CD4-positive, alpha-beta memory T cell (primary cell): ENCODE measurements at regions of chr11 and their contacts with region 1.

Region 1: GRCh38 chr11:67507864-67508485 is at the start of gene CDK2AP2:
- DNase-seq: peak; percentile 96 to 98 (median 97)
- H3K4me3 ChIP-seq: peak within 1 kb of the TSS; percentile 77 to 79
- H3K4me3 Mint-ChIP-seq: peak within 1 kb of the TSS; percentile 88 to 98 (median 90)
- H3K27ac ChIP-seq: peak within 1 kb of the TSS; percentile 93
- H3K27ac Mint-ChIP-seq: peak within 1 kb of the TSS; percentile 97 to 99 (median 99)
- H3K4me1 ChIP-seq: peaks cover 44% of the 10 kb centered on the region
- H3K4me1 Mint-ChIP-seq: peaks cover 20 to 55% (median 33%) of the 10 kb centered on the region in 4 donors
- H3K27me3 ChIP-seq: no peaks in the 10 kb centered on the region
- H3K27me3 Mint-ChIP-seq: peaks cover 3% of the 10 kb centered on the region in 2 donors
- total RNA-seq, gene CDK2AP2: 85.8 to 86.0 TPM

Region 2: DNA sequence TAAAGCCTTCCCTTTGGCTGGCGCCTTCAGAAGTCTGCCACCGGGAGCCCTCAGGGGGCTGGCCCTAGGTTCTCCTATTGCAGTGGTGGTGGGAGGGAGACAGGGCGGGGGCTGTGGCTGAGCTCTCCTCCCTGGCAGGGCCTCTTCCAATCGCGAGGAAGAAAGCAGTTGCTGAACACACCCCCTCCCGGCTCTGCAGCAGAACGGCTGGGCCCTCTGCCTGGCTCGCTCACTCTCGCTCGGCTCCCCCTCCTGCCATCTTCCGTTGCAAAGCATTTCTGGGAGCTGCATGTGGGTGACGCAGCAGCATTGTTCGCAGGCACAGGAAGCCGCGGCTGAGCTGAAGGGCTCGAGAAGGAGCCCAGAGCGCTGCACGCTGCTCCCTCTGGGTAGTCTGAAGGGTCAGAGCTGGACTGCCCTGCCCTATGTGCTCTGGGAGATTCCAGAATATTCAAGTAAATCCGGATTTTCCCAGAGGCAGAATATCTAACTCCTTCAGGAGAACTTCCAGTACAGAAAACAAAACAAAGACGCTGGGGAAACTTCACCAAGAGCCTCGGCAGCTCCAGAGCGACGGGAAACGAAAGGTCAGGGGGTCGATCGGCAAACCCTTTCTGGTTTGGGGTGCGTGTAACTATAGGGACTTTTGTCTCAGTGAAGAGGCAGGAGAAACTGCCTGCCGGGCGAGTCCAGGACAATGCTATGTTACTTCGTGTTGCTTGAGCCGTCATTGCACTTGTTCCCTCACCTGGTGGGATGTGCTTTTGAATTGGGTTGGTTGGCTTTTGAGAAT is 268.0 kb before region 1 on chr11:
- CTCF ChIA-PET with region 1: no interaction called
- POLR2A ChIA-PET with region 1: no interaction called
- intact Hi-C with region 1: loop called (anchors 2 kb)
- DNase-seq: peak; percentile 95 to 100 (median 98)
- H3K4me3 ChIP-seq: peak overlapping the region; percentile 52 to 87
- H3K4me3 Mint-ChIP-seq: peak overlapping the region; percentile 96 to 100 (median 99)
- H3K27ac ChIP-seq: peak overlapping the region; percentile 97
- H3K27ac Mint-ChIP-seq: peak overlapping the region; percentile 96 to 100 (median 100)
- H3K4me1 ChIP-seq: peaks cover 39% of the 10 kb centered on the region
- H3K4me1 Mint-ChIP-seq: peaks cover 39 to 62% (median 48%) of the 10 kb centered on the region in 4 donors
- H3K27me3 ChIP-seq: no peaks in the 10 kb centered on the region
- H3K27me3 Mint-ChIP-seq: no peaks in the 10 kb centered on the region

Region 3: DNA sequence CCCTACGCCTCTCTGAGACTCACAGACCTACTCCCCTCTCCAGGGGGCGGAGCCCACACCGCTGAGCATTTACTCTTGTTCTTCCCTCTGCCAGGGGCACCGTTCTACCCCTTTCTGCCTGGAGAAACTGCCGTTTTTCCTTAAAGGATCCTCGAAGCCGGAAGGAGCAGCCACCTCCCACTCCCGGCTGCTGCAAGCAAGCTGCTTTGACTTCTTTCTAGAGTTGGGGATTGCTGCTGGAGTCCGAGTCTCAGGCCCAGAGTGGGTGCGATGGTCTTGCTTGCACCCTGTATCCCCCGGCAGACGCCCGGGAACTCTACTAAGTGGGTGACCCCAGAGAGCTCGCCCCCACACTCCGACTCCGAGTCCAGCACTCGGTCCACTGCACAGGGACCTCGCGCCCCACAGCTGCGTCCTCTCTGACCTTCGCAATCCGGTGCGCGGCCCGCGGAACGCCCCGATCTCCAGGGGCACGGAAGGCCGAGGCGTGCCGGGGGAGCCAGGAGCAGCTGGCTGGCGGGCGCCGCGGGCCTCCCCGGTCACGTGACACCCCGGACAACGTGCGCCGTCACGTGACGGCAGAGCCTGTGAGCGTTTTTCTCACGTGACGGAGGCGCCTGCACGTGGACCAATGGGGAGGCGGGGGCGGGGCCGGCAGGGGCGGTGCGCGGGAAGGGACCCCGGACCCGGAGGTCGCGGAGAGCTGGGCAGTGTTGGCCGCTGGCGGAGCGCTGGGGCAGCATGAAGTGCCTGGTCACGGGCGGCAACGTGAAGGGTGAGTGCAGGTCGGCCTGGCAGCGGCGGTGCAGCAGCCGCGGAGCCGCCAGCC is 116.5 kb before region 1 on chr11 and contains the start of gene RAD9A:
- CTCF ChIA-PET with region 1: no interaction called
- POLR2A ChIA-PET with region 1: interaction called, 8 read pairs
- intact Hi-C with region 1: loop called (anchors 1 kb)
- DNase-seq: peak; percentile 86 to 93 (median 89)
- H3K4me3 ChIP-seq: peak within 1 kb of the TSS; percentile 63 to 75
- H3K4me3 Mint-ChIP-seq: peak within 1 kb of the TSS; percentile 87 to 93 (median 91)
- H3K27ac ChIP-seq: peak within 1 kb of the TSS; percentile 79
- H3K27ac Mint-ChIP-seq: peak within 1 kb of the TSS; percentile 82 to 94 (median 87)
- H3K4me1 ChIP-seq: peaks cover 17% of the 10 kb centered on the region
- H3K4me1 Mint-ChIP-seq: peaks cover 23 to 46% (median 36%) of the 10 kb centered on the region in 4 donors
- H3K27me3 ChIP-seq: no peaks in the 10 kb centered on the region
- H3K27me3 Mint-ChIP-seq: no peaks in the 10 kb centered on the region
- total RNA-seq, gene RAD9A: 51.8 to 55.9 TPM

Region 4: GRCh38 chr11:67428052-67428914 is 79.7 kb before region 1 on chr11 and contains the start of gene RPS6KB2:
- CTCF ChIA-PET with region 1: no interaction called
- POLR2A ChIA-PET with region 1: interaction called, 14 read pairs
- intact Hi-C with region 1: loop called (anchors 1 kb)
- DNase-seq: peak; percentile 97 to 99 (median 98)
- H3K4me3 ChIP-seq: peak within 1 kb of the TSS; percentile 94 to 95
- H3K4me3 Mint-ChIP-seq: peak within 1 kb of the TSS; percentile 93 to 100 (median 98)
- H3K27ac ChIP-seq: peak within 1 kb of the TSS; percentile 90
- H3K27ac Mint-ChIP-seq: peak within 1 kb of the TSS; percentile 95 to 99 (median 97)
- H3K4me1 ChIP-seq: peaks cover 49% of the 10 kb centered on the region
- H3K4me1 Mint-ChIP-seq: peaks cover 13 to 61% (median 31%) of the 10 kb centered on the region in 4 donors
- H3K27me3 ChIP-seq: no peaks in the 10 kb centered on the region
- H3K27me3 Mint-ChIP-seq: no peaks in the 10 kb centered on the region
- total RNA-seq, gene RPS6KB2: 78.1 to 79.9 TPM

Region 5: GRCh38 chr11:67468835-67469811 is 38.9 kb before region 1 on chr11 and contains the start of gene TMEM134:
- CTCF ChIA-PET with region 1: interaction called, 8 read pairs
- POLR2A ChIA-PET with region 1: interaction called, 18 read pairs
- intact Hi-C with region 1: loop called (anchors 1 kb)
- DNase-seq: peak; percentile 85 to 88 (median 88)
- H3K4me3 ChIP-seq: peak within 1 kb of the TSS; percentile 78 to 79
- H3K4me3 Mint-ChIP-seq: peak within 1 kb of the TSS; percentile 83 to 92 (median 90)
- H3K27ac ChIP-seq: peak within 1 kb of the TSS; percentile 81
- H3K27ac Mint-ChIP-seq: peak within 1 kb of the TSS; percentile 84 to 96 (median 91)
- H3K4me1 ChIP-seq: peaks cover 46% of the 10 kb centered on the region
- H3K4me1 Mint-ChIP-seq: peaks cover 16 to 36% (median 27%) of the 10 kb centered on the region in 4 donors
- H3K27me3 ChIP-seq: no peaks in the 10 kb centered on the region
- H3K27me3 Mint-ChIP-seq: no peaks in the 10 kb centered on the region
- total RNA-seq, gene TMEM134: 90.1 to 99.1 TPM

Region 6: GRCh38 chr11:67492801-67493547 is 15.0 kb before region 1 on chr11:
- CTCF ChIA-PET with region 1: interaction called, 3 read pairs
- POLR2A ChIA-PET with region 1: interaction called, 124 read pairs
- intact Hi-C with region 1: no loop called
- DNase-seq: no peak
- H3K4me3 ChIP-seq: no peak overlapping the region
- H3K4me3 Mint-ChIP-seq: no peak overlapping the region
- H3K27ac ChIP-seq: no peak overlapping the region
- H3K27ac Mint-ChIP-seq: peak overlapping the region in 1 of 7 donors; percentile 18
- H3K4me1 ChIP-seq: peaks cover 15% of the 10 kb centered on the region
- H3K4me1 Mint-ChIP-seq: peaks cover 6 to 18% (median 13%) of the 10 kb centered on the region in 4 donors
- H3K27me3 ChIP-seq: no peaks in the 10 kb centered on the region
- H3K27me3 Mint-ChIP-seq: no peaks in the 10 kb centered on the region

Region 7: DNA sequence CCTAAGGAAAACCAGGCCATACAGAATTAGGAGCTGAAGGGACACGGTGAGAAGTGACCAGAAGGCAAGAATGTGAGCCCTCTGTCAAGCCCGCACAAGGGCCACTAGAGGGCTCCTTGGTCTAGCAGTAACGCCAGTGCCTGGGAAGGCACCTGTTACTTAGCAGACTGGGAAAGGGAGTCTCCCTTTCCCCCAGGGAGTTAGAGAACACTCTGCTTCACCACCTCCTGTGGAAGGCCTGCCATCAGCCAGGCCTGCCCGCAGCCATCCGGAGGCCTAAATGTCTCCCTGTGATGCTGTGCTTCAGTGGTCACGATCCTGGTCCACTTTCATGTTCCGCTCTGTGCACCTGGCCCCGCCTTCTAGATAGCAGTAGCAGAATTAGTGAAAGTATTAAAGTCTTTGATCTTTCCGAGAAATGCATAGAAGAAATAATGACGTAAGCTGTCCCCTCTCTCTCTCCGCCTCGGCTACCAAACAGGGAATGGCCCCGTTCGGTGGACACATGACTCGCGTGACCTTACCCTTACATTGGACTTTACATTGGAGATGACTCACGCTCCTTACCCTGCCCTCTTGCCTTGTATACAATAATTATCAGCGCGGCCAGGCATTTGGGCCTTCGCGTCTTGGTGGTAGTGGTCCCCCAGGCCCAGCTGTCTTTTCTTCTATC is 64.9 kb after region 1 on chr11:
- CTCF ChIA-PET with region 1: no interaction called
- POLR2A ChIA-PET with region 1: no interaction called
- intact Hi-C with region 1: no loop called
- DNase-seq: peak in 2 of 5 donors; percentile 23 to 25
- H3K4me3 ChIP-seq: no peak overlapping the region
- H3K4me3 Mint-ChIP-seq: peak overlapping the region in 1 of 8 donors; percentile 42
- H3K27ac ChIP-seq: no peak overlapping the region
- H3K27ac Mint-ChIP-seq: no peak overlapping the region
- H3K4me1 ChIP-seq: no peaks in the 10 kb centered on the region
- H3K4me1 Mint-ChIP-seq: no peaks in the 10 kb centered on the region
- H3K27me3 ChIP-seq: no peaks in the 10 kb centered on the region
- H3K27me3 Mint-ChIP-seq: peaks cover 14 to 18% of the 10 kb centered on the region in 2 donors